ENCODE measurements at regions of chr17 and their contacts with region 1.

Region 1: GRCh38 chr17:73126716-73127473 is 34.4 kb upstream of the SLC39A11 start:
- DNase-seq: no peak
- ATAC-seq: no peak; the same call in 1 of the 2 replicates
- H3K4me3 ChIP-seq: no peak overlapping the region
- H3K27ac ChIP-seq: no peak overlapping the region
- H3K4me1 ChIP-seq: no peaks in the 10 kb centered on the region
- H3K27me3 ChIP-seq: no peaks in the 10 kb centered on the region
- CTCF ChIP-seq: no peak; the same call in 1 of the 2 replicates

Region 2: GRCh38 chr17:72922219-72922618 is 204.7 kb before region 1 on chr17:
- CTCF ChIA-PET with region 1: no interaction called
- POLR2A ChIA-PET with region 1: no interaction called
- in situ Hi-C with region 1: no loop called
- intact Hi-C with region 1: no loop called
- DNase-seq: no peak
- ATAC-seq: peak; percentile 30; the same call in 1 of the 2 replicates
- H3K4me3 ChIP-seq: no peak overlapping the region
- H3K27ac ChIP-seq: no peak overlapping the region
- H3K4me1 ChIP-seq: no peaks in the 10 kb centered on the region; the same call in 1 of the 2 replicates
- H3K27me3 ChIP-seq: no peaks in the 10 kb centered on the region
- CTCF ChIP-seq: no peak

Region 3: GRCh38 chr17:73013816-73014663 is 112.9 kb before region 1 on chr17:
- CTCF ChIA-PET with region 1: no interaction called
- POLR2A ChIA-PET with region 1: no interaction called
- in situ Hi-C with region 1: no loop called
- intact Hi-C with region 1: no loop called
- DNase-seq: no peak
- ATAC-seq: peak; percentile 62
- H3K4me3 ChIP-seq: no peak overlapping the region
- H3K27ac ChIP-seq: peak overlapping the region; percentile 14; the same call in 1 of the 2 replicates
- H3K4me1 ChIP-seq: peaks cover 26% of the 10 kb centered on the region
- H3K27me3 ChIP-seq: no peaks in the 10 kb centered on the region
- CTCF ChIP-seq: no peak

Region 4: DNA sequence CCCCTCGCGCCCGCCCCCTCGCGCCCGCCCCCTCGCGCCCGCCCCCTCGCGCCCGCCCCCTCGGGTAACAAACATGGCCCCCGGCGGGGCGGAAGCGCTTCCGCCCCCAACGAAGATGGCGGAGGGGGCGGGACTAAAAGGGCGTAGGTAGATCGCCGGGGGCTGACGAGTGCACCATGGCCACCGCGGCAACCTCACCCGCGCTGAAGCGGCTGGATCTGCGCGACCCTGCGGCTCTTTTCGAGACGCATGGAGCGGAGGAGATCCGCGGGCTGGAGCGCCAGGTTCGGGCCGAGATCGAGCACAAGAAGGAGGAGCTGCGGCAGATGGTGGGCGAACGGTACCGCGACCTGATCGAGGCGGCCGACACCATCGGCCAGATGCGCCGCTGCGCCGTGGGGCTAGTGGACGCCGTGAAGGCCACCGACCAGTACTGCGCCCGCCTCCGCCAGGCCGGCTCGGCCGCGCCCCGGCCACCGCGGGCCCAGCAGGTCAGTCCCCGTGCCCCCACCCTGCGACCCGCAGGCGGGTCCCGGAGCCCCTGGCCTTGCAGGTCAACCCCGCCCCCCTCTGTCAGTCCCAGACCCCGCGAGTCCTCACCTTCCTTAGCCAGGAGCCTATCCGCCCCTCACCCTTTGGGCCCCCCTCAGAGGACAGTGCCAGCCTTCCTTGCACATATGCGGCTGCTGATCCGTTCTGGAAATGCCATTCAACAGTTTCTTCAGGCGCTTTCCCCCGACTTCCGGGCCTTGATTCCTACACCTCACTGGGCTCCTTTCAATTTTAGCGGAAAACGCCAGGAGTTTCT is 66.2 kb after region 1 on chr17 and contains the start of gene COG1:
- CTCF ChIA-PET with region 1: no interaction called
- POLR2A ChIA-PET with region 1: interaction called, 15 read pairs
- in situ Hi-C with region 1: no loop called
- intact Hi-C with region 1: no loop called
- DNase-seq: no peak
- ATAC-seq: peak; percentile 87
- H3K4me3 ChIP-seq: peak within 1 kb of the TSS; percentile 62 to 89
- H3K27ac ChIP-seq: peak within 1 kb of the TSS; percentile 90
- H3K4me1 ChIP-seq: peaks cover 14% of the 10 kb centered on the region; the same call in 1 of the 2 replicates
- H3K27me3 ChIP-seq: no peaks in the 10 kb centered on the region
- CTCF ChIP-seq: no peak
- total RNA-seq, gene COG1: 41.2 TPM